ENCODE measurements at regions of chr6 and their contacts with region 1.

Region 1: GRCh38 chr6:160992061-160992979 is 751 bp downstream of the MAP3K4 start:
- DNase-seq: peak; percentile 55 to 74
- ATAC-seq: peak; percentile 51 to 68 (median 56)
- H3K4me3 ChIP-seq: peak overlapping the region; percentile 94
- H3K27ac ChIP-seq: peak overlapping the region; percentile 93
- H3K4me1 ChIP-seq: peaks cover 26% of the 10 kb centered on the region
- H3K27me3 ChIP-seq: no peaks in the 10 kb centered on the region
- CTCF ChIP-seq: peak; percentile 47

Region 2: GRCh38 chr6:160160450-160160849 is 831.9 kb before region 1 on chr6:
- intact Hi-C with region 1: loop called in 1 of 2 experiments (anchors 5 kb)
- DNase-seq: no peak
- ATAC-seq: no peak
- H3K4me3 ChIP-seq: no peak overlapping the region
- H3K27ac ChIP-seq: no peak overlapping the region
- H3K4me1 ChIP-seq: no peaks in the 10 kb centered on the region
- H3K27me3 ChIP-seq: no peaks in the 10 kb centered on the region
- CTCF ChIP-seq: no peak

Region 3: GRCh38 chr6:161023316-161023715 is 31.0 kb after region 1 on chr6:
- intact Hi-C with region 1: no loop called
- DNase-seq: no peak
- ATAC-seq: no peak
- H3K4me3 ChIP-seq: no peak overlapping the region
- H3K27ac ChIP-seq: no peak overlapping the region
- H3K4me1 ChIP-seq: peaks cover 1% of the 10 kb centered on the region
- H3K27me3 ChIP-seq: no peaks in the 10 kb centered on the region
- CTCF ChIP-seq: no peak

Measured in psoas muscle (tissue), 8 donors.